ENCODE measurements at regions of chr12 and their contacts with region 1.

Region 1: GRCh38 chr12:129911428-129912049 is 7.7 kb upstream of the TMEM132D start:
- DNase-seq: peak; percentile 30
- ATAC-seq: peak; percentile 88
- H3K4me3 ChIP-seq: no peak overlapping the region
- H3K27ac ChIP-seq: no peak overlapping the region
- H3K4me1 ChIP-seq: no peaks in the 10 kb centered on the region
- H3K27me3 ChIP-seq: peaks cover 0 to 17% of the 10 kb centered on the region in 2 experiments; a peak in 3 of 5 replicates
- CTCF ChIP-seq: peak; percentile 90
- EP300 ChIP-seq: no peak
- POLR2A ChIP-seq: no peak
- RAD21 ChIP-seq: peak; percentile 78

Region 2: GRCh38 chr12:128259556-128260070 is 1651.9 kb before region 1 on chr12:
- CTCF ChIA-PET with region 1: interaction called, 3 read pairs
- POLR2A ChIA-PET with region 1: no interaction called
- in situ Hi-C with region 1: loop called (anchors 10 kb)
- intact Hi-C with region 1: no loop called
- DNase-seq: peak; percentile 24
- ATAC-seq: peak; percentile 52; the same call in 2 of the 3 replicates
- H3K4me3 ChIP-seq: no peak overlapping the region
- H3K27ac ChIP-seq: no peak overlapping the region
- H3K4me1 ChIP-seq: no peaks in the 10 kb centered on the region
- H3K27me3 ChIP-seq: no peaks in the 10 kb centered on the region
- CTCF ChIP-seq: peak; percentile 72
- EP300 ChIP-seq: no peak
- POLR2A ChIP-seq: no peak
- RAD21 ChIP-seq: no peak; the same call in 1 of the 2 replicates

Region 3: DNA sequence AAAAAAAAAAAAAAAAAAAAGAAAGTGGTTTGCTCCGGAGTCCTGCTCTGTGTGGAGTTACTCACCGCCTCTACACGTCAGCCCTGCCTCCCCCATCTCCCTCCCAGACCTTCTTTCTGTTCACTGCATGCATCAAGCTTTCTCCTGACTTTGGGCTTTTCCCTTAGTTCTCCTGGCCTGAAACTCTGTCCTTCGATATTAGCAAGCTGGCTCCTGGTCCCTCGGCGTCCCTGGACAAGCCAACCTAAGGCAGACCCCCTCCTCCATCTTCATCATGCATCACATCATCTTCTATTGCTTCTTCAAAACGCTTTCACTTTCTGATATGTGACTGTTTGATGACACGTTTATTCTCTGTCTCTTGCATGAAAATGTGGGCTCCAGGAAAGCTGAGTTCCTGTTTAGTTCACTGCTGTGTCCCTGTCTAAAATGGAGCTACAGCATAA is 1128.4 kb before region 1 on chr12:
- CTCF ChIA-PET with region 1: interaction called, 9 read pairs
- POLR2A ChIA-PET with region 1: no interaction called
- in situ Hi-C with region 1: loop called (anchors 5 kb)
- intact Hi-C with region 1: no loop called
- DNase-seq: no peak
- ATAC-seq: no peak
- H3K4me3 ChIP-seq: no peak overlapping the region
- H3K27ac ChIP-seq: no peak overlapping the region
- H3K4me1 ChIP-seq: peaks cover 11% of the 10 kb centered on the region
- H3K27me3 ChIP-seq: no peaks in the 10 kb centered on the region
- CTCF ChIP-seq: no peak
- EP300 ChIP-seq: no peak
- POLR2A ChIP-seq: no peak
- RAD21 ChIP-seq: no peak

Region 4: DNA sequence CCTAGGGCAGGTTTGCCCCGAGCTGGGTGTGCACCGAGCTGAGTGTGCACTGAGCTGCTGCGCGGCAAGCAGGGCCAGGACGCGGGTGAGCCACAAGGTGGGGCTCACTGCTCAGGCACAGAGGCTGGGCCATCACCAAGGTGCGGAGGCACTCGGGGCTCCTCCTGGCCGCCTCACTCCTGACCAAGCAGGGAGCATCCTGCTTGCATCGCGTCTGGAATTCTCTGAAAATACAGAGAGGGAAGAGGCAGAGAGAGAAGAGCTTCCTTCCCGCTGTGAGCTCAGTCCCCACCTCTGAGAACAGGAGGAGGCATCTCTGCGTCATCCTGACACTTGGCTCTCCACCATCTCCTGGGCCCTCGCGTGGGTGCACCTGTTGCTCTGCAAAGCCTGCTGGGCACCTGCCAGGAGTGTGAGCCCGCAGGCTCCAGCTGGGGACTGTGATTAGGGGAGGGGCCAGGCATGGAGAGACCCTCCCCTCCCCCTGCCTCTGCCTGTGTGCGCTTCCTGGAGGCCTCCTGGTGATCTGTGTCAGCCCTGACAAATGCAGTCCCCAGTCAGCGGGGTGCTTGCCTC is 942.0 kb before region 1 on chr12:
- CTCF ChIA-PET with region 1: interaction called, 6 read pairs
- POLR2A ChIA-PET with region 1: no interaction called
- in situ Hi-C with region 1: loop called (anchors 5 kb)
- intact Hi-C with region 1: loop called (anchors 5 kb)
- DNase-seq: no peak
- ATAC-seq: peak; percentile 97
- H3K4me3 ChIP-seq: no peak overlapping the region
- H3K27ac ChIP-seq: no peak overlapping the region
- H3K4me1 ChIP-seq: peaks cover 8% of the 10 kb centered on the region; the same call in 1 of the 2 replicates
- H3K27me3 ChIP-seq: peaks cover 0 to 2% of the 10 kb centered on the region in 2 experiments; a peak in 1 of 5 replicates
- CTCF ChIP-seq: peak; percentile 88
- EP300 ChIP-seq: no peak
- POLR2A ChIP-seq: no peak
- RAD21 ChIP-seq: peak; percentile 70

Region 5: GRCh38 chr12:129193263-129193871 is 718.2 kb before region 1 on chr12:
- CTCF ChIA-PET with region 1: interaction called, 19 read pairs
- POLR2A ChIA-PET with region 1: no interaction called
- in situ Hi-C with region 1: loop called (anchors 25 kb)
- intact Hi-C with region 1: no loop called
- DNase-seq: no peak
- ATAC-seq: no peak
- H3K4me3 ChIP-seq: no peak overlapping the region
- H3K27ac ChIP-seq: no peak overlapping the region
- H3K4me1 ChIP-seq: no peaks in the 10 kb centered on the region
- H3K27me3 ChIP-seq: no peaks in the 10 kb centered on the region
- CTCF ChIP-seq: peak; percentile 64
- EP300 ChIP-seq: no peak
- POLR2A ChIP-seq: no peak
- RAD21 ChIP-seq: no peak

Region 6: GRCh38 chr12:129641926-129642325 is 269.6 kb before region 1 on chr12:
- CTCF ChIA-PET with region 1: no interaction called
- POLR2A ChIA-PET with region 1: no interaction called
- in situ Hi-C with region 1: no loop called
- intact Hi-C with region 1: no loop called
- DNase-seq: no peak
- ATAC-seq: no peak
- H3K4me3 ChIP-seq: no peak overlapping the region
- H3K27ac ChIP-seq: no peak overlapping the region
- H3K4me1 ChIP-seq: no peaks in the 10 kb centered on the region
- H3K27me3 ChIP-seq: no peaks in the 10 kb centered on the region
- CTCF ChIP-seq: no peak
- EP300 ChIP-seq: no peak
- POLR2A ChIP-seq: no peak
- RAD21 ChIP-seq: no peak

Region 7: GRCh38 chr12:129941618-129942017 is 30.1 kb after region 1 on chr12:
- CTCF ChIA-PET with region 1: no interaction called
- POLR2A ChIA-PET with region 1: no interaction called
- in situ Hi-C with region 1: no loop called
- intact Hi-C with region 1: no loop called
- DNase-seq: no peak
- ATAC-seq: no peak
- H3K4me3 ChIP-seq: no peak overlapping the region
- H3K27ac ChIP-seq: no peak overlapping the region
- H3K4me1 ChIP-seq: no peaks in the 10 kb centered on the region
- H3K27me3 ChIP-seq: peaks cover 0 to 6% of the 10 kb centered on the region in 2 experiments; a peak in 1 of 5 replicates
- CTCF ChIP-seq: no peak
- EP300 ChIP-seq: no peak
- POLR2A ChIP-seq: no peak
- RAD21 ChIP-seq: no peak

Measured in HepG2 (cell line).